CD8-positive, alpha-beta T cell (primary cell): ENCODE measurements at regions of chr2 and their contacts with region 1.

Region 1: DNA sequence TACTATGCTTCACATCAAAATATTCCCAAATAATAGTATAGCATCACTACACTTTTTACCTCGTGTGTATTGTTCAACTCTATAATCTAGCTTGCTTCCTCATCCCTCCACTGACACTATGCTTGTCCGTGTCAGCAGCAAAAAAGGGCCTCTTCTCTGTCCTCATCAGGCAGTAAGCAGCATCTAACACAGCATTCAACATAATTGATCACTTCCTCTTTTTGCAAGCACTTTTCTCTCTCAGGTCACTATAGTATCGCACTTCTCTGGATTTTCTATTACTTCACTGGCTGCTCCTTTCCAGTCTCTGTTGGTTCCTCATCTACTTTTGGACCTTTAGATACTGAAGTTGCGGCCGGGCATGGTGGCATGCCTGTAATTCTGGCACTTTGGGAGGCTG is 64.9 kb upstream of the ZSWIM2 start:
- DNase-seq: no peak
- ATAC-seq: no peak
- H3K4me3 ChIP-seq: no peak overlapping the region
- H3K4me3 Mint-ChIP-seq: no peak overlapping the region
- H3K27ac ChIP-seq: no peak overlapping the region
- H3K27ac Mint-ChIP-seq: no peak overlapping the region
- H3K4me1 ChIP-seq: no peaks in the 10 kb centered on the region
- H3K4me1 Mint-ChIP-seq: no peaks in the 10 kb centered on the region
- H3K27me3 ChIP-seq: no peaks in the 10 kb centered on the region
- H3K27me3 Mint-ChIP-seq: no peaks in the 10 kb centered on the region
- CTCF ChIP-seq: no peak

Region 2: GRCh38 chr2:186959486-186959885 is 45.6 kb after region 1 on chr2:
- CTCF ChIA-PET with region 1: no interaction called
- POLR2A ChIA-PET with region 1: no interaction called
- intact Hi-C with region 1: loop called in 1 of 2 experiments (anchors 2 kb)
- DNase-seq: peak in 1 of 9 experiments; percentile 13
- ATAC-seq: no peak
- H3K4me3 ChIP-seq: no peak overlapping the region
- H3K4me3 Mint-ChIP-seq: no peak overlapping the region
- H3K27ac ChIP-seq: no peak overlapping the region
- H3K27ac Mint-ChIP-seq: no peak overlapping the region
- H3K4me1 ChIP-seq: no peaks in the 10 kb centered on the region
- H3K4me1 Mint-ChIP-seq: no peaks in the 10 kb centered on the region
- H3K27me3 ChIP-seq: no peaks in the 10 kb centered on the region
- H3K27me3 Mint-ChIP-seq: no peaks in the 10 kb centered on the region
- CTCF ChIP-seq: no peak